ENCODE measurements at regions of chr1 and their contacts with region 1.

Region 1: GRCh38 chr1:99707535-99708142 is 58.8 kb downstream of the FRRS1 start:
- DNase-seq: peak; percentile 58 to 93 (median 81)
- H3K4me3 ChIP-seq: no peak overlapping the region
- H3K27ac ChIP-seq: no peak overlapping the region
- H3K4me1 ChIP-seq: peaks cover 0 to 22% of the 10 kb centered on the region in 2 donors
- H3K27me3 ChIP-seq: no peaks in the 10 kb centered on the region
- CTCF ChIP-seq: peak; percentile 89 to 95 (median 92)
- POLR2A ChIP-seq: no peak

Region 2: GRCh38 chr1:99170516-99170915 is 537.1 kb before region 1 on chr1:
- intact Hi-C with region 1: loop called in 1 of 2 experiments (anchors 10 kb)
- DNase-seq: no peak
- H3K4me3 ChIP-seq: no peak overlapping the region
- H3K27ac ChIP-seq: no peak overlapping the region
- H3K4me1 ChIP-seq: peaks cover 0 to 4% of the 10 kb centered on the region in 2 donors
- H3K27me3 ChIP-seq: no peaks in the 10 kb centered on the region
- CTCF ChIP-seq: no peak
- POLR2A ChIP-seq: no peak

Region 3: GRCh38 chr1:99481391-99481996 is 226.1 kb before region 1 on chr1:
- intact Hi-C with region 1: loop called in 1 of 2 experiments (anchors 10 kb)
- DNase-seq: peak; percentile 36 to 76 (median 59)
- H3K4me3 ChIP-seq: no peak overlapping the region
- H3K27ac ChIP-seq: no peak overlapping the region
- H3K4me1 ChIP-seq: no peaks in the 10 kb centered on the region
- H3K27me3 ChIP-seq: no peaks in the 10 kb centered on the region
- CTCF ChIP-seq: peak; percentile 60 to 84 (median 70)
- POLR2A ChIP-seq: no peak

Region 4: GRCh38 chr1:99548943-99549605 is 158.6 kb before region 1 on chr1:
- intact Hi-C with region 1: no loop called
- DNase-seq: peak; percentile 27 to 64 (median 40)
- H3K4me3 ChIP-seq: no peak overlapping the region
- H3K27ac ChIP-seq: no peak overlapping the region
- H3K4me1 ChIP-seq: peaks cover 0 to 6% of the 10 kb centered on the region in 2 donors
- H3K27me3 ChIP-seq: no peaks in the 10 kb centered on the region
- CTCF ChIP-seq: no peak
- POLR2A ChIP-seq: no peak